WTC11 (cell line): ENCODE measurements at regions of chr1 and their contacts with region 1.

Region 1: DNA sequence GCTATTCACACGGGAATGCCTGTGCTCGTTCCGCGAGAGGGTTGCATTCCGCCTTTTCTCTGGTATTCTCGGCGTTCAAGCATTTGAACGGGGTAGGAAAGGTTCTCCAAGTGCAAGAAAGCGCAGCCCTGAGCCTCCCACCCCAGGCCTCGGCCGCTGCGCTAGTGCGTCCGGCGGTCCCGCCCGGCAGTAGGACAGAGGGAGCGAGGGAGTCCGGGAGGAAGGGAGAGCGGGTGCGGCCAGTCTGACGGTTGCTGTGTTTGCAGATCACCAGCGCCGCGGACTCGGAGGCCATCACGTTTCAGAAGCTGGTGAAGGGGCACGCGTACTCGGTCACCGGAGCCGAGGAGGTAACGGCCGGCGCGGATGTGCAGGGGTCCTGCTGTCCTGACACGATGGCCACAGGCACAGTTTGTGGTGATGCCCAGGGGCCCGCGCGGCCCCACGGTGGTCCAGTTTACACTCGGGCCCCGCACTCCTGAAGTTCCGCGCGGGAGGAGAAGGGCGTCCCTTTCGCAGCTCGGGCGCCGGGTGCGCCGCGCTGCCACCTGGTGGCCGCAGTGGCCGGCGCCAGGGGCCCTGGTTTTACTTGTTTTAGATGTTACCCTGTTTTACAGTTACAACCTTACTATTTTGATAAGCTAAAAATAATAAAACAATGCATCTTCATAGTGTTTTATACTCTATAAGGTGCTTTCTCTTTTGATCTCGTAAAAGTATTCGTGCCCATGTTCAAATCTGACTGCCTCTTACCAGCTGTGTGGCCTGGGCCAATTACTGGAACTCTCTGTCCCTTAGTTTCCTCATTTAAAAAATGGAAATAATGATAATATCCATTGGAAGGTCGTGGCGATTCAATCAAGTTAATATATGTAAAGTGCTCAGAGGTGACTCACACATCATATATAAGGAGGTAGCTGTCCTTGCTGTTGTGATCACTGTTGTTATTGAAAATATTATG is 36.7 kb downstream of the CAPN2 start:
- DNase-seq: peak; percentile 57
- ATAC-seq: peak; percentile 59
- H3K4me3 Mint-ChIP-seq: peak overlapping the region; percentile 82
- H3K27ac Mint-ChIP-seq: no peak overlapping the region
- H3K4me1 Mint-ChIP-seq: peaks cover 17% of the 10 kb centered on the region
- H3K27me3 Mint-ChIP-seq: peaks cover 30% of the 10 kb centered on the region
- CTCF ChIP-seq: peak; percentile 83

Region 2: GRCh38 chr1:223695941-223696340 is 53.1 kb before region 1 on chr1:
- CTCF ChIA-PET with region 1: interaction called, 25 read pairs
- POLR2A ChIA-PET with region 1: no interaction called
- DNase-seq: no peak
- ATAC-seq: no peak
- H3K4me3 Mint-ChIP-seq: no peak overlapping the region
- H3K27ac Mint-ChIP-seq: no peak overlapping the region
- H3K4me1 Mint-ChIP-seq: no peaks in the 10 kb centered on the region; the same call in 1 of the 2 replicates
- H3K27me3 Mint-ChIP-seq: no peaks in the 10 kb centered on the region; the same call in 1 of the 2 replicates
- CTCF ChIP-seq: no peak

Region 3: DNA sequence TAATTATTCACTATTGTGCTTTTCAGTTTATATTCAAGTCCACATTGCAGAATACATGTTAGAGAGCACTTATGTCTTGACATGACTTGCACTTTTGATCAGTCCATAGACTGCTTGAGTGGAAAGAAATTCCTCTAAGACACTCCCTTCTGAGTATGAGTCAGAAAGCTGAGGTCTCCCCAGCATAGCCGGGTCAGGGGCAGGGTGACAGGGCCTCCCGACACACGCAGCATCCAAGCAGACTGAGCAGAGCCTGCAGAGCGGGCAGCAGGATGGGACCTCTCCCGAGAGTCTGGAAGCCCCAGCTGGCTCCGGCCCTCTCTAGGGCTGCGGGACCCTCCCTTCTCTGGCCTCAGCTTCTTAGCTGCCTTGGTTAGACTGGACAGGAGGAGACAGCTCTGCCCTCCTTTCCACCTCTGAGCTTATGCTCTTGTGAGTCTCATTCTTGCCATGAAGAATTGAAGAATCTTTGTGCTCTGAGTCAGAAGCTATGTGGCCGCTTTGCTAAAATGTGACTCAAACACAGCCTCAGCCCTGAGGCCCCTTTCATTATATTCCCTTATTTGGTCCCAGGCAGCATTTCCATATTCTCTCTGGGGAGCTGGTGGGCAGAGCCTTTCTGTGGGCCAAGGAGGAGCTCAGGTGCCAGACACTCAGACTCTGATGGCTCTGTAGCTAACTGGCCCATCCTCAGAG is 48.0 kb before region 1 on chr1:
- CTCF ChIA-PET with region 1: interaction called, 25 read pairs
- POLR2A ChIA-PET with region 1: no interaction called
- DNase-seq: no peak
- ATAC-seq: peak; percentile 16; the same call in 1 of the 2 replicates
- H3K4me3 Mint-ChIP-seq: no peak overlapping the region
- H3K27ac Mint-ChIP-seq: no peak overlapping the region
- H3K4me1 Mint-ChIP-seq: peaks cover 4% of the 10 kb centered on the region
- H3K27me3 Mint-ChIP-seq: peaks cover 2% of the 10 kb centered on the region; the same call in 1 of the 2 replicates
- CTCF ChIP-seq: no peak

Region 4: DNA sequence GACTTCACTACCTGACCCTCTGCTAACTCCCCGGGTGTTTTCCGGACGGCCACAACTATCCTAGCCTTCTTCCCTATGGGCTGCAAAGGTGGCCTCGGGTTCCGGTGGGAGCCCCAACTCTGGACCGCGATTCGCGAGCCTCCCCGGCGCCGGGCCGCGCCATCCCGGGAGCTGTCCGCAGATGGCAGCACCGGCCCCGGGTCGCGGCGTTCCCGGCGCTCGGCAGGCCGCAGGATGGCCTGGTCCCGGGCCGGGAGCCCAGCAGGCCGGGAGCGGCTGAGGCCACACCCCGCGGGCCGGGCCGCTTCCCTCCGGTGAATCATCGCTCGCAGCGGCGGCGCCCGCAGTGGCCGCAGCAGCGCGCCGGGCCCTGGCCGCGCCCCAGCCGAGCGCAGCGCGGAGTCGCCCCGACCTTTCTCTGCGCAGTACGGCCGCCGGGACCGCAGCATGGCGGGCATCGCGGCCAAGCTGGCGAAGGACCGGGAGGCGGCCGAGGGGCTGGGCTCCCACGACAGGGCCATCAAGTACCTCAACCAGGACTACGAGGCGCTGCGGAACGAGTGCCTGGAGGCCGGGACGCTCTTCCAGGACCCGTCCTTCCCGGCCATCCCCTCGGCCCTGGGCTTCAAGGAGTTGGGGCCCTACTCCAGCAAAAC is 36.7 kb before region 1 on chr1 and contains the start of gene CAPN2:
- CTCF ChIA-PET with region 1: interaction called, 34 read pairs
- POLR2A ChIA-PET with region 1: interaction called, 3 read pairs
- DNase-seq: peak; percentile 77
- ATAC-seq: peak; percentile 84
- H3K4me3 Mint-ChIP-seq: peak within 1 kb of the TSS; percentile 75
- H3K27ac Mint-ChIP-seq: no peak within 1 kb of the TSS
- H3K4me1 Mint-ChIP-seq: peaks cover 40% of the 10 kb centered on the region
- H3K27me3 Mint-ChIP-seq: peaks cover 74% of the 10 kb centered on the region
- CTCF ChIP-seq: no peak
- total RNA-seq, gene CAPN2: 21.3 to 24.6 TPM (median 24.2 TPM) in 3 replicates

Region 5: GRCh38 chr1:223720928-223721591 is 28.0 kb before region 1 on chr1:
- CTCF ChIA-PET with region 1: interaction called, 31 read pairs
- POLR2A ChIA-PET with region 1: interaction called, 3 read pairs
- DNase-seq: no peak
- ATAC-seq: no peak
- H3K4me3 Mint-ChIP-seq: no peak overlapping the region
- H3K27ac Mint-ChIP-seq: no peak overlapping the region
- H3K4me1 Mint-ChIP-seq: peaks cover 38% of the 10 kb centered on the region
- H3K27me3 Mint-ChIP-seq: peaks cover 94% of the 10 kb centered on the region
- CTCF ChIP-seq: no peak

Region 6: DNA sequence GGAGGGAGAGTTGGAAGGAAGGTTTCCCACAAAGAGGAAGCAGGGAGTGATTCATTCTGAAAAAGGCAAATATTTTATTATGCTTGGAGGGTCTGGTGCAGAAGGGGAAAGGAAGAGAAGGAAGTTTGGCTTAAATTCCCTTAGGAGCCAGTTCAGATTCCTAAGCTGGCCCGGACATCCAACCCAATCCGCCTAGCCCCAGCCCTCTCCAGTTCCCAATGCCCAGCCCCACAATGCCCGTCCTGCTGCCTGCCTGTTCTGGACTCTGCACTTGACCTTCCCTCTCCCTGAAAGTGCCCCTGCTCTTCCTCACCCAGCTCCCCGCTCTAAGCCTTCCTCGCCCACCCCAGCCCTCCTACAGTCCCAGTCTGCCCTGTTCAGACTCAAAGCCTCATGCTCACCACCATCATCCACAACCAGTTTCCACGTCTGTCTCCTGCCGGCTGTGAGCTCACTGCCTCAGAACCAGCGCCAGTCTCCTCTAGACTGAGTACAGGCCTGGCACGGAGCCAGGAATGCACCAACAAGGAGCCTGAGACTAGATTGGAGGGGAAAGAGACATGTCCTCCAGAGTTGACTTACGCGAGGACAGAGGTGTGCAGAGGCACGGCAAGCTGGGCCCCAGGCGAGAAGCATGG is 17.8 kb before region 1 on chr1:
- CTCF ChIA-PET with region 1: interaction called, 19 read pairs
- POLR2A ChIA-PET with region 1: no interaction called
- DNase-seq: no peak
- ATAC-seq: no peak
- H3K4me3 Mint-ChIP-seq: no peak overlapping the region
- H3K27ac Mint-ChIP-seq: no peak overlapping the region
- H3K4me1 Mint-ChIP-seq: peaks cover 68% of the 10 kb centered on the region
- H3K27me3 Mint-ChIP-seq: peaks cover 78% of the 10 kb centered on the region
- CTCF ChIP-seq: no peak

Region 7: GRCh38 chr1:223759273-223759672 is 10.2 kb after region 1 on chr1:
- CTCF ChIA-PET with region 1: interaction called, 10 read pairs
- POLR2A ChIA-PET with region 1: no interaction called
- DNase-seq: peak; percentile 38
- ATAC-seq: peak; percentile 90
- H3K4me3 Mint-ChIP-seq: no peak overlapping the region
- H3K27ac Mint-ChIP-seq: peak overlapping the region; percentile 67; the same call in 1 of the 2 replicates
- H3K4me1 Mint-ChIP-seq: peaks cover 9% of the 10 kb centered on the region
- H3K27me3 Mint-ChIP-seq: no peaks in the 10 kb centered on the region
- CTCF ChIP-seq: no peak

Region 8: GRCh38 chr1:223860051-223860622 is 111.1 kb after region 1 on chr1:
- CTCF ChIA-PET with region 1: no interaction called
- POLR2A ChIA-PET with region 1: no interaction called
- DNase-seq: no peak
- ATAC-seq: no peak
- H3K4me3 Mint-ChIP-seq: no peak overlapping the region
- H3K27ac Mint-ChIP-seq: no peak overlapping the region
- H3K4me1 Mint-ChIP-seq: no peaks in the 10 kb centered on the region
- H3K27me3 Mint-ChIP-seq: no peaks in the 10 kb centered on the region
- CTCF ChIP-seq: no peak